GM10248 (cell line): ENCODE measurements at regions of chr19 and their contacts with region 1.

Region 1: GRCh38 chr19:45439569-45440254 is 16.0 kb upstream of the ERCC1 start:
- DNase-seq: peak; percentile 86
- CTCF ChIP-seq: peak; percentile 89

Region 2: GRCh38 chr19:45276284-45276687 is 163.4 kb before region 1 on chr19:
- CTCF ChIA-PET with region 1: no interaction called
- POLR2A ChIA-PET with region 1: no interaction called
- DNase-seq: no peak
- CTCF ChIP-seq: no peak

Region 3: GRCh38 chr19:45413497-45413896 is 26.2 kb before region 1 on chr19:
- CTCF ChIA-PET with region 1: interaction called, 12 read pairs
- POLR2A ChIA-PET with region 1: no interaction called
- DNase-seq: no peak
- CTCF ChIP-seq: no peak

Region 4: GRCh38 chr19:45450012-45450333 is 10.3 kb after region 1 on chr19:
- CTCF ChIA-PET with region 1: interaction called, 58 read pairs
- POLR2A ChIA-PET with region 1: interaction called, 5 read pairs
- DNase-seq: no peak
- CTCF ChIP-seq: no peak

Region 5: DNA sequence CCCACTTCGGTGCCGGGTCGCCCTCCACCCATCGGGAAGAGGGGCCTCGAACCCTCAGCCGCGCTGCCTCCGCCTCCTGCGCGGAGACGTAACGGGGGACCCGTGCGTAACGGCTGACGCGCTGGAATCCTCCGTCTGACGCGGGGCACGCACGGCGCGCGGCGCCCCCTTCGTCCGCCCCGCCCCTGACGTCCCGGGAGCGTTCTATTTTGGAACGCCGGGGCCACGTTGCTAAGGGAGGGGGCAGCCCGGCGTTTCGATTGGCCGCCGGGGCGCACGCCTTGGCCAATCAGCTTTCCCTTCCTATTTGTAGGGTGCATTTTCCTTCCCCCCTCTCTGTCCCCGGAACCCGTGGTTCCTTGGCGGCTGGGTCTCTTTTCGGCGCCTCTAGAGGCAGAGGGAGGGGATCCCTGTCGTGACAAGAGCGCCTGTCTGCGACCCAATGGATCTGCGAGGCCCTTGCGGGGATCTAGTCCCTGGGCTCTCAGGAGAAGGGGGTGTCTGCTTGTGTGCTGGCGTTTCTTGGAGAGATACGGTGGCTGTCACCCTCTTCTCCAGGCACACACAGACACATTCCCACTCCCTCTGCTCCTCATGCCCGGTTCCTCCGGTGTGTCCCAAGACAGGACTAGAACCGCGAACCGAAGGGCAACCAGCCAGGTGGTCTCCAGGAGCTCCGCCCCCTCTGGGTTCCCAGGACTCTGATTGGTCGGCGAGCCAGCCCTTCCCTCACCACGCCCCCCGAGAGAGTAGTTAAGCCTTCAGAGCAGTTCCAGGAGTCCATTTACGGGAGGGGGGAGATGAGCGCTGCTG is 29.6 kb after region 1 on chr19:
- CTCF ChIA-PET with region 1: interaction called, 339 read pairs
- POLR2A ChIA-PET with region 1: interaction called, 20 read pairs
- DNase-seq: peak; percentile 95
- CTCF ChIP-seq: no peak

Region 6: DNA sequence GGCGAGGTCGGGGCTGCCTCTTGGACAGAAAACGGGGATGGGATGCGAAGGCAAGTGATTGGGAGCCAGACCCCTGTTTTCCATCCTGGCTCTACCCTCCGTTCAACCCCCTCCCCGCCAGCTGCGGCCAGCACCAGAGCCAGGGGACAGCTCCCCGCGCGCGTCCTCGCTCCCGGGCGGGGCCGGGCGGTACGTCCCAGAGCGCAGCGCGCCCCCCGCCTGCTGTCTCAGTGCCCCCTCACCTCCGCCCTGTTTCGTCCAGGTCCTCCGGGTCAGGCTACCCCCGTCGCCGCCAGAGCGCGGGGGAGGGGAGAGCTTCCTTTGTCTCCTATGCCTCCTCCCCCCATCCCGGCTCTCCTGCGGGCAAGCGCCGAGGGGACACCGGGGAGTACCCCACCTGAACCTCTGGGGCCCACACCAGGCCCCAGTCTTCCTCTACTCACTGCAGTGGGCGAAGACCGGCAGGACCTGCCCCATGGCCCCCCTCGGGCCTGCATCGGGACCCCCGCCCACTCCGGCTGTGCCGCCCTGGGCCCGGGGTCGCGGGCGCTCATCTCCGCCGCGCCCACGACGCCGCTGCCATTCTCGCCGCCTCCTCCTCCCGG is 56.7 kb after region 1 on chr19:
- CTCF ChIA-PET with region 1: interaction called, 25 read pairs
- POLR2A ChIA-PET with region 1: no interaction called
- DNase-seq: peak; percentile 48
- CTCF ChIP-seq: no peak